Breast epithelium (tissue), 4 donors: ENCODE measurements at regions of chr20 and their contacts with region 1.

Region 1: GRCh38 chr20:11626551-11626950 is 291.1 kb upstream of the BTBD3 start:
- DNase-seq: no peak
- H3K4me3 ChIP-seq: no peak overlapping the region
- H3K27ac ChIP-seq: no peak overlapping the region
- H3K4me1 ChIP-seq: no peaks in the 10 kb centered on the region
- H3K27me3 ChIP-seq: no peaks in the 10 kb centered on the region
- CTCF ChIP-seq: no peak
- POLR2A ChIP-seq: no peak

Region 2: GRCh38 chr20:11274141-11274594 is 352.4 kb before region 1 on chr20:
- intact Hi-C with region 1: no loop called
- DNase-seq: no peak
- H3K4me3 ChIP-seq: no peak overlapping the region
- H3K27ac ChIP-seq: no peak overlapping the region
- H3K4me1 ChIP-seq: no peaks in the 10 kb centered on the region
- H3K27me3 ChIP-seq: no peaks in the 10 kb centered on the region
- CTCF ChIP-seq: peak in 2 of 3 donors; percentile 39 to 52
- POLR2A ChIP-seq: no peak

Region 3: GRCh38 chr20:11469795-11470435 is 156.6 kb before region 1 on chr20:
- intact Hi-C with region 1: no loop called
- DNase-seq: no peak
- H3K4me3 ChIP-seq: no peak overlapping the region
- H3K27ac ChIP-seq: no peak overlapping the region
- H3K4me1 ChIP-seq: no peaks in the 10 kb centered on the region
- H3K27me3 ChIP-seq: no peaks in the 10 kb centered on the region
- CTCF ChIP-seq: no peak
- POLR2A ChIP-seq: no peak

Region 4: GRCh38 chr20:11608736-11609135 is 17.8 kb before region 1 on chr20:
- intact Hi-C with region 1: loop called (anchors 1 kb)
- DNase-seq: no peak
- H3K4me3 ChIP-seq: no peak overlapping the region
- H3K27ac ChIP-seq: no peak overlapping the region
- H3K4me1 ChIP-seq: no peaks in the 10 kb centered on the region
- H3K27me3 ChIP-seq: no peaks in the 10 kb centered on the region
- CTCF ChIP-seq: no peak
- POLR2A ChIP-seq: no peak